ENCODE measurements at regions of chr5 and their contacts with region 1.

Region 1: DNA sequence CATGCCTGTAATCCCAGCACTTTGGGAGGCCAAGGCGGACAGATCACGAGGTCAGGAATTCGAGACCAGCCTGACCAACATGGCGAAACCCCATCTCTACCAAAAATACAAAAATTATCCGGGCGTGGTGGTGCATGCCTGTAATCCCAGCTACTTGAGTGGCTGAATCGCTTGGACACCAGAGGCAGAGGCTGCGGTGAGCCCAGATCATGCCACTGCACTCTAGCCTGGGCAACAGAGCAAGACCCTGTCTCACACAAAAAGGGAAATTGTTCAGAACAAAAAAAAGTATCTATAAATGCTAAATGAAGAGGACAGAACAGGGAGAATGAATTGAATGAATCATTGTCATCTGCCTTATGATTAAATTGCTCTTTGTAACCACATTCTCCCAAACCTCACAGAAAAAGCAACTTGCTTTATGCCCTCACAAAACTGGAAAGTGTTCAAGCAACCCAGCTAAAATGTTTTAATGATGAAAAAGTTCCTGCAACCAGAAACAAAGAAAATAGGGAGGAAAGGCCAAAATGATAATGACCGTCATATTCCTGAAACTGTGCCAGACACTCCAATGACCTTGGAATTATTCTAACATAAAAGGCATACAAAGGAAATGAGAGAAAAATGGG is 83.7 kb downstream of the SERINC5 start:
- DNase-seq: no peak
- ATAC-seq: no peak
- H3K4me3 Mint-ChIP-seq: peak overlapping the region in 1 of 10 donors; percentile 6
- H3K27ac Mint-ChIP-seq: peak overlapping the region in 9 of 10 donors; percentile 22 to 89 (median 62)
- H3K4me1 Mint-ChIP-seq: peaks cover 30 to 71% (median 49%) of the 10 kb centered on the region in 4 donors
- H3K27me3 Mint-ChIP-seq: no peaks in the 10 kb centered on the region

Region 2: DNA sequence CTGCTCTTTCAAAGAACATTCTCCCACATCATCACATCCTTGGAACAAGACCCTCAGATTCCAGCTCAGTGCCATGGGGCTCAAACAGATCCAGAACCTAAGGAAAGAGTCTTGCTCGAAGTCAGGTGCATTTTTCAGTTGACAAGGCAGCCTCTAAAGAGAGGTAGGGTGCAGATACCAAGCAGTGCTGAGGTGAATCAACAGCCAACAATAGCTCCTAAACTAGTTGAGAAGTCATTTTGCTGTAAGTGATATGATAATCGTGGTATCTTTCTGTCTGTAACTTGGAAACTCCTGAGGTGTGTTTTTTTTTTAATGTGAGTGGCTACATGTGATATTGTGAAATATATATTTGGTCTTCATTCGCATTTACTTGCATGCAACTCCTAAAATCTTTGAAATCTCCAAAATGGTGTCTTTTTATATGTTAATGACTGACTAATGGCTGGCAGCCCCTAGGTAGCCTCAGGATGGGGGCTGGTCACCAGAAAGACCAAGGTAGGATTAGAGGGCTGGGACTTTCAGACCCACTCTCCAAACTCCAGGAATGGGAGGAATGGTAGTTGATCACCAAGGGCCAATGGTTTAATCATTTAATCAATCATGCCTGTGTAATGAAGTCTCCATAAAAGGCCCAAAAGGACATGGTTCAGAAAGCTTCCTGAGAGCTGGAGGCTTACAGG is 12.9 kb before region 1 on chr5:
- POLR2A ChIA-PET with region 1: interaction called, 10 read pairs
- DNase-seq: no peak
- ATAC-seq: no peak
- H3K4me3 Mint-ChIP-seq: peak overlapping the region in 1 of 10 donors; percentile 1
- H3K27ac Mint-ChIP-seq: peak overlapping the region; percentile 59 to 99 (median 80)
- H3K4me1 Mint-ChIP-seq: peaks cover 14 to 58% (median 35%) of the 10 kb centered on the region in 4 donors
- H3K27me3 Mint-ChIP-seq: no peaks in the 10 kb centered on the region

Measured in naive thymus-derived CD8-positive, alpha-beta T cell (primary cell).